CD8-positive, alpha-beta T cell (primary cell): ENCODE measurements at regions of chr11 and their contacts with region 1.

Region 1: DNA sequence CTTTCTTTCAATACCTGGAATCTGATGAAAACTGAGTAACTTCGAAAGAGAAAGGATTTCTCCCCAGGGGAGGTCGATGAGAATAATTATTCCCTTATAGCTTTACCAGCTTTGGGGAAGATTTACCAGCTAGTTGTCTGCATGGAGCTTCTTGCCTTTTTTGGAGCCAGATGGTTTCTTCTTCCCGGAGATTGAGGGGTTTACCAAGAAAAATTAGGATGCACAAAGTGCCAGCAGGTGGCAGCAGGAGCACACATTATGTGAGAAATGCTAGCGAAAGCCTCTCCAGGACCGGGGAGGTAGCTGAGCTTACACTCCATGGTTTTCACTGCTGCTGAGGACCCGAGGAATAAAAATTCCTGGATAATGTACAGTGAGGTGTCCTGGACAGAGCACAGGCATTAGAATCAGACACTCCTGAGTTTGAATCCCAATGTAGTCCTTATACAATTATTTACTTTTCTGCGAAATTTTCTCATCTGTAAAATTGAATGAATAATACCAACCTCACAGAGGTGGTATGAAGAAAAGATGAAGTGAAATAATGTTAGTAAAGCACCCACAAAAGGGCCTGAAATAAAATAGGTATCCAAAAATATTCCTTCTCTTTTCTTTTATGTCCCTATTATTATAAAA is 46.0 kb upstream of the PARVA start:
- DNase-seq: peak; percentile 22 to 81 (median 73)
- ATAC-seq: no peak
- H3K4me3 ChIP-seq: no peak overlapping the region
- H3K4me3 Mint-ChIP-seq: no peak overlapping the region
- H3K27ac ChIP-seq: no peak overlapping the region
- H3K27ac Mint-ChIP-seq: no peak overlapping the region
- H3K4me1 ChIP-seq: no peaks in the 10 kb centered on the region
- H3K4me1 Mint-ChIP-seq: peaks cover 5% of the 10 kb centered on the region
- H3K27me3 ChIP-seq: no peaks in the 10 kb centered on the region
- H3K27me3 Mint-ChIP-seq: no peaks in the 10 kb centered on the region
- CTCF ChIP-seq: peak; percentile 80

Region 2: GRCh38 chr11:12354750-12355545 is 23.6 kb after region 1 on chr11:
- CTCF ChIA-PET with region 1: interaction called, 20 read pairs
- POLR2A ChIA-PET with region 1: no interaction called
- intact Hi-C with region 1: no loop called
- DNase-seq: no peak
- ATAC-seq: no peak
- H3K4me3 ChIP-seq: no peak overlapping the region
- H3K4me3 Mint-ChIP-seq: no peak overlapping the region
- H3K27ac ChIP-seq: no peak overlapping the region
- H3K27ac Mint-ChIP-seq: no peak overlapping the region
- H3K4me1 ChIP-seq: peaks cover 36% of the 10 kb centered on the region
- H3K4me1 Mint-ChIP-seq: peaks cover 40% of the 10 kb centered on the region
- H3K27me3 ChIP-seq: no peaks in the 10 kb centered on the region
- H3K27me3 Mint-ChIP-seq: no peaks in the 10 kb centered on the region
- CTCF ChIP-seq: no peak

Region 3: GRCh38 chr11:12397931-12398334 is 66.6 kb after region 1 on chr11:
- CTCF ChIA-PET with region 1: interaction called, 10 read pairs
- POLR2A ChIA-PET with region 1: no interaction called
- intact Hi-C with region 1: no loop called
- DNase-seq: no peak
- ATAC-seq: no peak
- H3K4me3 ChIP-seq: no peak overlapping the region
- H3K4me3 Mint-ChIP-seq: no peak overlapping the region
- H3K27ac ChIP-seq: no peak overlapping the region
- H3K27ac Mint-ChIP-seq: no peak overlapping the region
- H3K4me1 ChIP-seq: no peaks in the 10 kb centered on the region
- H3K4me1 Mint-ChIP-seq: peaks cover 7% of the 10 kb centered on the region
- H3K27me3 ChIP-seq: no peaks in the 10 kb centered on the region
- H3K27me3 Mint-ChIP-seq: no peaks in the 10 kb centered on the region
- CTCF ChIP-seq: no peak

Region 4: DNA sequence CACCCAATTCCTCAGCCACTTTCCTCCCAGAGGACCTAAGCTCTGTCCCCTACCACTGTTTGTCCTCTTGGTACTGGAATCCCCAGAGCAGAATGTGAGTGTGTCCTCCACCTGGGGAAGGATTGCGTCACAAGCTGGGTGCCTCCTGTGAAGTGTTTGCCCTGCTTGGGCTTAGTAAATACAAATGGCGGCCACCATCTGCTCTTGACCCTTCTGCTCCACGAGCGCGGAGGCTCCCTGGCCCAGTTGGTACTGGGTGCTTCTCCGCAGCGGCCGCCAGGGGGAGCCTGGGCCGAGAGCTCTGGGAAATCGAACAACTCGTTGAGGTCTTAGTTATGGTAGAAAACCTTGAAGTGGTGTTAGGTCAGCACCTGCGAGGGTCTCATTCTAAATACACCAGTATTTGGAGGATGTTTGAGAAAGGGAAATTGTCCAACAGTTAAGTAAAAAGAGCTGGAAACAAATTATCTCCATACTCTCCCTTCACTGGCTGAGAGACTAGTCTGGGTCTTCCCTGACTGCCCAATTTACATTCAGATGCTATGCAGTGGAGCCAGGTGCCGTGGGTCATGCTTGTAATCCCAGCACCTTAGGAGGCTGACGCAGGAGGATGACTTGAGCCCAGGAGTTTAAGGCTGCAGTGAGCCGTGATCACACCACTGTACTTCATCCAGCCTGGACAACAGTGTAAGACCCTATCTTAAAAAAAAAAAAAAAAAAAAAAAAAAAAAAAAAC is 268.2 kb after region 1 on chr11:
- CTCF ChIA-PET with region 1: interaction called, 11 read pairs
- POLR2A ChIA-PET with region 1: no interaction called
- intact Hi-C with region 1: loop called in 1 of 2 experiments (anchors 2 kb)
- DNase-seq: peak; percentile 1 to 56 (median 25)
- ATAC-seq: no peak
- H3K4me3 ChIP-seq: no peak overlapping the region
- H3K4me3 Mint-ChIP-seq: no peak overlapping the region
- H3K27ac ChIP-seq: no peak overlapping the region
- H3K27ac Mint-ChIP-seq: no peak overlapping the region
- H3K4me1 ChIP-seq: peaks cover 18% of the 10 kb centered on the region
- H3K4me1 Mint-ChIP-seq: peaks cover 15% of the 10 kb centered on the region
- H3K27me3 ChIP-seq: peaks cover 0 to 4% of the 10 kb centered on the region in 2 experiments
- H3K27me3 Mint-ChIP-seq: peaks cover 36% of the 10 kb centered on the region
- CTCF ChIP-seq: peak; percentile 39

Region 5: DNA sequence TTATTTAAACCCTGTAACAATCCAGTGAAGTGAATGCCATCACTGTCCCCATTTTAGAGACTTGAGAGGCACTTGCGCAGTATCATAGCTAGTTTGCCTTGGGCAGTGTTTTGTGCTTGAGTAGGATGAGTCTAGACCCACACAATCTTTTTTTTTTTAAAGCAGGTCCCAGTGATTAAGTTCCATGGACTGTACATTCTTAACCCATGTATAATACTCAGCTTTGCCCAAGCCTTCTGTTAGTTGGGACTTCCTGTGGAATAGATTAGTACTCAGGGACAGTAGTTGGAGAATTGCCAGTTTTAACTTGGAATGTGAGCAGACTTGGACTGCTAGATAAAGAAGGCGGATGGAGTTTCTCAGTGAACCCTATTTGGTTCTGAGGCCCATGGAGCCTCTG is 569.1 kb after region 1 on chr11:
- CTCF ChIA-PET with region 1: interaction called, 13 read pairs
- POLR2A ChIA-PET with region 1: no interaction called
- intact Hi-C with region 1: no loop called
- DNase-seq: no peak
- ATAC-seq: no peak
- H3K4me3 ChIP-seq: no peak overlapping the region
- H3K4me3 Mint-ChIP-seq: no peak overlapping the region
- H3K27ac ChIP-seq: no peak overlapping the region
- H3K27ac Mint-ChIP-seq: no peak overlapping the region
- H3K4me1 ChIP-seq: no peaks in the 10 kb centered on the region
- H3K4me1 Mint-ChIP-seq: no peaks in the 10 kb centered on the region
- H3K27me3 ChIP-seq: no peaks in the 10 kb centered on the region
- H3K27me3 Mint-ChIP-seq: peaks cover 19% of the 10 kb centered on the region
- CTCF ChIP-seq: no peak

Region 6: DNA sequence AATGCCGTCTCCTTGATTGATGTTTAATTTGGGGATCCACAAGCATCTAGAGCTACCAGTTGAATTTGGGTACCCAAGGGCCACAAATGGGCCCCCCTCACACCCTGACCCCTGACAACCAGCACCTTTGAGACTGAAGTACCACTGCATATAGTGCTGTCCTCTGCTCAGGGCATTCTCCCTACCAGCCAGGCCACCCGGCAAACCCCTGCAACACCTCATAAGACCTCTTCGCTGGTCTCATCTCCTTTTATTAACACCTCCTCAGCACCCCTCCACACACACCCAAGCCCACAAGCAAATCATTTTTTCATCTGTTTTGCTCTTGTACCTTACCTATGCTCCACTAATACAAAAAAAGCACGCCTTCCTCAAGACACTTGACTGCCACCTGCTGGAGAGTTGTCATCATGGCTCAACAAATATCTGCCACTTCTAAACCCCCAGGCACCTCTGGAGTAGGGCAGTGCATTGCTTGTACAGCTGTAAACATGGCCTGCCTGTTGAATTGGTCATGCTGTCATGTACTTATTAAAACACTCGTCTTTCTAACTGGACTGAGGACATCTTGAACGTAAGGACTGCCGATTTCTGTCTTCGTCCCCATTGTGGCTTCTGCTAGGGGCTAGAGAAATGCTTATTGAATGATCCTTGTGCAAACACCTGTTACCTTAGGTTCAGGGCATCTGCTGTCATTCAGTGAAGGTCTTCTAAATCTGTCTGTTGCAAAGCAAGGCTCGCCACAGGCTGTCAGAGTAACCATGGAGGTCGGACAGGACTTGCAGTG is 1012.8 kb after region 1 on chr11:
- CTCF ChIA-PET with region 1: interaction called, 3 read pairs
- POLR2A ChIA-PET with region 1: no interaction called
- intact Hi-C with region 1: loop called (anchors 1 to 5 kb)
- DNase-seq: peak; percentile 47 to 81 (median 73)
- ATAC-seq: peak; percentile 75
- H3K4me3 ChIP-seq: no peak overlapping the region
- H3K4me3 Mint-ChIP-seq: no peak overlapping the region
- H3K27ac ChIP-seq: no peak overlapping the region
- H3K27ac Mint-ChIP-seq: peak overlapping the region; percentile 2
- H3K4me1 ChIP-seq: peaks cover 16% of the 10 kb centered on the region
- H3K4me1 Mint-ChIP-seq: peaks cover 64% of the 10 kb centered on the region
- H3K27me3 ChIP-seq: no peaks in the 10 kb centered on the region
- H3K27me3 Mint-ChIP-seq: no peaks in the 10 kb centered on the region
- CTCF ChIP-seq: peak; percentile 93